GM23248 (cell line): ENCODE measurements at regions of chr7 and their contacts with region 1.

Region 1: GRCh38 chr7:85041605-85042216 is 145.1 kb downstream of the SEMA3D start:
- DNase-seq: peak; percentile 74
- H3K4me3 ChIP-seq: no peak overlapping the region
- H3K27ac ChIP-seq: no peak overlapping the region
- H3K4me1 ChIP-seq: no peaks in the 10 kb centered on the region
- H3K27me3 ChIP-seq: no peaks in the 10 kb centered on the region

Region 2: DNA sequence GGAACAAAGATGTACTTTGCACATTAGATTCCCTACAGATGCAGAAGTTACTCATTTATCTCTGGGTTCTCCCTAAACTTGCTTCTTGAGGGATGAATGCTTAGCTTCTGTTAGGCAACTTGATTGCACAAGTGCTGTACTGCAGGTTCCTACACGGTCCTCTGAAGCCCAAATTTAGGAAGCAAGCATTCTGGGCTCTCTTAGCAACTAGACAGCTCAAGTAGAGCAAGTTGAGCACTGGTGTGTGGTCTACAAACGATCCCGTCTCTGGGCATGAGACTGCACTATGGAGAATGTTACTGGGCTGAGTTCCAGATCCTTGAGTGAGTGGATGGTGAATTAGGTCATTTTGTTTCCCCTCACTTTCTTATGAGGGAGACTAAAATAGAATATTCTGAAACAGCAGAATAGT is 130.8 kb after region 1 on chr7:
- in situ Hi-C with region 1: loop called (anchors 5 kb)
- DNase-seq: peak; percentile 90
- H3K4me3 ChIP-seq: peak overlapping the region; percentile 25; the same call in 1 of the 2 replicates
- H3K27ac ChIP-seq: peak overlapping the region; percentile 40
- H3K4me1 ChIP-seq: peaks cover 41% of the 10 kb centered on the region
- H3K27me3 ChIP-seq: no peaks in the 10 kb centered on the region

Region 3: GRCh38 chr7:85464042-85464651 is 422.4 kb after region 1 on chr7:
- in situ Hi-C with region 1: loop called (anchors 10 kb)
- DNase-seq: peak; percentile 29
- H3K4me3 ChIP-seq: no peak overlapping the region
- H3K27ac ChIP-seq: no peak overlapping the region
- H3K4me1 ChIP-seq: 0 out of 2 replicates have a peak, but pooled peaks cover under 1% of the 10 kb centered on the region
- H3K27me3 ChIP-seq: no peaks in the 10 kb centered on the region

Region 4: DNA sequence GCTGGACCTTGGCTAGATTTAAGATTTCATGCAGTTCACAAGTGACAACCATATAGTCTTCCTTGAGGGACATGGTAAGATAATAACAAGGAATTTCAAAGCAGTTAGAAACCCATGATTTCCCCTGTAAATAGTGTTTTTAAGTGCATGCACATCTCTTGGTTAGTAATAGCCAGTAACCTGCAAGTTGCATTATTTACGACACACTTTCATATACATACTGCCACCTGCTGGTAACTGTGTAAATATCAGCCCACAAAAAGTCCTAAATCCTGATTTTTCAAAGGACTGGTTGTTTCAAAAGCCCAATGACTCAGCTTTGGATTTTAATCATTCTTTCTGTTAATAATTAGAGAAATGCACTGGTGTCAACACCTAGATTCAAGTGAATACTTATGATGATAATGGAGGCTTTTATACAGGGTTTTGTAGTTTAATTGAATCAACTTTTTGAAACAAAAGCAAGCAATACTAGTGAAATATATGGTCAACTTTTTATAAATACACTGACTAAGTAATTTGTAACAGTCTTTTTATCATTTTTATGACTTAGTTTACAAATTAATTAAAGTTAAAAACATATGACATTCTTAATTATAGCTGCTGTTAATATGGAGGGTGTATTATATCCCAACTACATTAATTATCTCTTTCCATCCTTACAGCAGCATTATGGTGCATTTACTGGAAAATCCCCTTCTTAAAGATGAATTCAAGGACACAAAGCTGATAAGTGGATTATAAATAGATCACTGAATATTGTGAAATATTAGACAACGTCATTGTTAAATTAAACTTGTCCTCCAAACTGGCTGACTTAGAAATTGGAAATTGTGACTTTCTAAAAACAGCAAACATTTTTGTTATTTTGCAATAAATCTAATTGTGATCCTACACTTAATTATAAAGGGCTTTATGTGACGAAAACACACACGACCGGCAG is 512.8 kb after region 1 on chr7:
- in situ Hi-C with region 1: loop called (anchors 10 kb)
- DNase-seq: peak; percentile 80
- H3K4me3 ChIP-seq: no peak overlapping the region
- H3K27ac ChIP-seq: no peak overlapping the region
- H3K4me1 ChIP-seq: peaks cover 15% of the 10 kb centered on the region
- H3K27me3 ChIP-seq: no peaks in the 10 kb centered on the region

Region 5: GRCh38 chr7:85749696-85750453 is 708.2 kb after region 1 on chr7:
- in situ Hi-C with region 1: loop called (anchors 25 kb)
- DNase-seq: no peak
- H3K4me3 ChIP-seq: no peak overlapping the region
- H3K27ac ChIP-seq: no peak overlapping the region
- H3K4me1 ChIP-seq: peaks cover 7% of the 10 kb centered on the region; the same call in 1 of the 2 replicates
- H3K27me3 ChIP-seq: no peaks in the 10 kb centered on the region

Region 6: DNA sequence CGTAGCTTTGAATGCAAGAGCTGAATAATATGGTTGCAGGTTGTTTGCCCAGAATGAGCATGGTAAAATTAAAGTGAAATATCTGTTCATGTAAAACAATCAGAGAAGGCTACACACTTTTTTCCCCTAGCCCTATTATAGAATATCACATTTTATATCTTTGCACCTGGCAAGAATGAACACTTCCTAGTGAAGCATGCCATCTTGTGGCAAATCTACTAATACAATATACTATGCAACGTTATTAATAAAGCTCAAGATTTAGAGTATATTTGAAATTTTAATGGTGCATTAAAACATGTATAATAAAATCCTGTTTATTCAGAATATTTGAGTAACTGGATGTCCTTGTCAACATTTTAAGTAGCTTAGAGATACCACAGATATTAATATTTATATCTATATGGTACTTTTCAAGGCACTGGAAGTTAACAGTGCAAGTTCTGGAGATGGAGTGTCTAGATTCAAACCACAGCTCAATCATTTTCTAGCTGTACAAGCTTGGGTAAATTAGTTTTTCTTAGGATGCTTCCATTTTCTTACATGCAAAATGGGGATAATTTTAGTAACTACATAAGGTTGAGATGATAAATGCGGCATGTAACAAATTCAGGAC is 788.2 kb after region 1 on chr7:
- in situ Hi-C with region 1: loop called (anchors 10 kb)
- DNase-seq: peak; percentile 64
- H3K4me3 ChIP-seq: no peak overlapping the region
- H3K27ac ChIP-seq: no peak overlapping the region
- H3K4me1 ChIP-seq: peaks cover 28% of the 10 kb centered on the region
- H3K27me3 ChIP-seq: no peaks in the 10 kb centered on the region